Activated CD4-positive, alpha-beta memory T cell treated with anti-CD3 and anti-CD28 coated beads for 36 hours (primary cell): ENCODE measurements at regions of chr1 and their contacts with region 1.

Region 1: DNA sequence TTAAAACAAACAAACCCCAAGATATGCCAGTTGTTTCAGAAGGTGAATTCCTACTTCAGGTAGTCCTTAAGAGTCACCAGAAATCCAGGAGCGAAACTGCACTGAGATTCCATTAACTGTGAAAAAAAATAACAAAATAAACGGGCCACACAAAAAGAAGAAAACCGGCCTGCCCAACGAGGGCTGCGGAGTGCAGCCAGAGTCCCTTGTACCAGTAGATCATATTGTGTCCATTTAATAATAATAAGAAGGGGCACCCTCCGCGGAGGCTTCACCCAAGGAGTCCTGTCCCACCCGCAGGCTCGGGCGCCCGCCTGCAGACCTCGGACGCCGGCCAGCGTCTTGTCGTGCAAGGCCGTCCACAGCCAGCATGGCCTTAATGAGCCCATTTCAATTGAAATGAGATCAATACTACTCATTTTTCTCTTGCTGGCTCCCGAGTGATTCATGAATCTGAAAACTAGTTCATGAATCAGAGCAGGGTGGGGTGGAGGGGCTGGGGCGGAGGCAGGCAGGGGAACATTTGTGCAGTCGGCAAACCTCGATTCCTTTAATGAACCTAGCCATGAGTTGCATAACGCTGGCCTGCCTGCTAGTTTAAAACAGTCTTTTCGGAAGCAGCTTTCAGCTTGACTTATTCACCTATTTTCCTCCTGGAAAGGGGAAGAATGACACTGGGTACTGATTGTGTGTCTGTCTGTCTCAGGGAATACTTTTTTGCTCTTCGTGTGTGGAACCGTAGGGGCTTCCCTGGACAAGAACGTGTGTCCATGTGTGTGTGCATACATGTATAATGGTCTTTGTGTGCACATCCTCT is 113.1 kb upstream of the IRF2BP2 start:
- DNase-seq: peak; percentile 91
- H3K4me3 Mint-ChIP-seq: peak overlapping the region; percentile 60
- H3K27ac Mint-ChIP-seq: peak overlapping the region; percentile 96
- H3K4me1 Mint-ChIP-seq: peaks cover 66% of the 10 kb centered on the region
- H3K27me3 Mint-ChIP-seq: no peaks in the 10 kb centered on the region

Region 2: GRCh38 chr1:234458352-234459017 is 264.6 kb before region 1 on chr1:
- CTCF ChIA-PET with region 1: no interaction called
- POLR2A ChIA-PET with region 1: no interaction called
- intact Hi-C with region 1: no loop called
- DNase-seq: no peak
- H3K4me3 Mint-ChIP-seq: no peak overlapping the region
- H3K27ac Mint-ChIP-seq: no peak overlapping the region
- H3K4me1 Mint-ChIP-seq: peaks cover 3% of the 10 kb centered on the region
- H3K27me3 Mint-ChIP-seq: no peaks in the 10 kb centered on the region

Region 3: GRCh38 chr1:234683861-234684632 is 39.1 kb before region 1 on chr1:
- CTCF ChIA-PET with region 1: no interaction called
- POLR2A ChIA-PET with region 1: interaction called, 3 read pairs
- intact Hi-C with region 1: loop called (anchors 5 kb)
- DNase-seq: no peak
- H3K4me3 Mint-ChIP-seq: no peak overlapping the region
- H3K27ac Mint-ChIP-seq: no peak overlapping the region
- H3K4me1 Mint-ChIP-seq: no peaks in the 10 kb centered on the region
- H3K27me3 Mint-ChIP-seq: no peaks in the 10 kb centered on the region

Region 4: GRCh38 chr1:234699795-234700665 is 23.1 kb before region 1 on chr1:
- CTCF ChIA-PET with region 1: no interaction called
- POLR2A ChIA-PET with region 1: interaction called, 10 read pairs
- intact Hi-C with region 1: loop called (anchors 1 kb)
- DNase-seq: peak; percentile 58
- H3K4me3 Mint-ChIP-seq: peak overlapping the region; percentile 10
- H3K27ac Mint-ChIP-seq: peak overlapping the region; percentile 31
- H3K4me1 Mint-ChIP-seq: peaks cover 16% of the 10 kb centered on the region
- H3K27me3 Mint-ChIP-seq: no peaks in the 10 kb centered on the region

Region 5: GRCh38 chr1:235045034-235045720 is 322.1 kb after region 1 on chr1:
- CTCF ChIA-PET with region 1: no interaction called
- POLR2A ChIA-PET with region 1: interaction called, 10 read pairs
- intact Hi-C with region 1: no loop called
- DNase-seq: peak; percentile 70
- H3K4me3 Mint-ChIP-seq: no peak overlapping the region
- H3K27ac Mint-ChIP-seq: peak overlapping the region; percentile 91
- H3K4me1 Mint-ChIP-seq: peaks cover 59% of the 10 kb centered on the region
- H3K27me3 Mint-ChIP-seq: no peaks in the 10 kb centered on the region